HepG2 (cell line): ENCODE measurements at regions of chr4 and their contacts with region 1.

Region 1: GRCh38 chr4:180372691-180373090 is 1870.5 kb upstream of the TENM3 start:
- DNase-seq: no peak
- ATAC-seq: no peak
- H3K4me3 ChIP-seq: no peak overlapping the region
- H3K27ac ChIP-seq: no peak overlapping the region
- H3K4me1 ChIP-seq: no peaks in the 10 kb centered on the region
- H3K27me3 ChIP-seq: no peaks in the 10 kb centered on the region
- CTCF ChIP-seq: no peak
- EP300 ChIP-seq: no peak
- POLR2A ChIP-seq: no peak
- RAD21 ChIP-seq: no peak

Region 2: GRCh38 chr4:180253419-180253818 is 119.3 kb before region 1 on chr4:
- CTCF ChIA-PET with region 1: no interaction called
- POLR2A ChIA-PET with region 1: no interaction called
- in situ Hi-C with region 1: no loop called
- intact Hi-C with region 1: no loop called
- DNase-seq: no peak
- ATAC-seq: no peak
- H3K4me3 ChIP-seq: no peak overlapping the region
- H3K27ac ChIP-seq: no peak overlapping the region
- H3K4me1 ChIP-seq: no peaks in the 10 kb centered on the region
- H3K27me3 ChIP-seq: no peaks in the 10 kb centered on the region
- CTCF ChIP-seq: no peak
- EP300 ChIP-seq: no peak
- POLR2A ChIP-seq: no peak
- RAD21 ChIP-seq: no peak

Region 3: DNA sequence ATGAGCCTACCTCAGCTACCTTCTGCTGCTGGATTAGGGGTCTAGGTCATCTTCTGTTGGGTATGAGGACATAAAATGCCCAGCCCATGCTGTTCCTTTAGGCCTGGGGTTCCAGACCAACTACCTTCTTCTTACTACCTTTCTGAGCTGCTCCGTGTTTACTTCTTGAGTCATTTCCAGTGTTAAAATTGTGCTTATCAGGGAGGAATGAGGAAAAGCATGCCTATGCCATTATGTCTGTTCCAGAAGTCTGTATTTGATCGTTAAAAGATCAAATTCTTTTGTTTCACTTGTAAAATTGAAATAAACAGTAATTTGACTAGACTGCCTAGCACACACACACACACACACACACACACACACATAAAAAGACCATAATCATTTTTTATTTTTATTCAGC is 42.2 kb before region 1 on chr4:
- CTCF ChIA-PET with region 1: no interaction called
- POLR2A ChIA-PET with region 1: no interaction called
- in situ Hi-C with region 1: no loop called
- intact Hi-C with region 1: loop called (anchors 1 kb)
- DNase-seq: no peak
- ATAC-seq: no peak
- H3K4me3 ChIP-seq: no peak overlapping the region
- H3K27ac ChIP-seq: no peak overlapping the region
- H3K4me1 ChIP-seq: no peaks in the 10 kb centered on the region
- H3K27me3 ChIP-seq: no peaks in the 10 kb centered on the region; a peak in 1 of 5 replicates
- CTCF ChIP-seq: no peak
- EP300 ChIP-seq: no peak
- POLR2A ChIP-seq: no peak
- RAD21 ChIP-seq: no peak

Region 4: GRCh38 chr4:180486342-180486741 is 113.7 kb after region 1 on chr4:
- CTCF ChIA-PET with region 1: no interaction called
- POLR2A ChIA-PET with region 1: no interaction called
- in situ Hi-C with region 1: no loop called
- intact Hi-C with region 1: no loop called
- DNase-seq: no peak
- ATAC-seq: no peak
- H3K4me3 ChIP-seq: no peak overlapping the region
- H3K27ac ChIP-seq: no peak overlapping the region
- H3K4me1 ChIP-seq: no peaks in the 10 kb centered on the region
- H3K27me3 ChIP-seq: no peaks in the 10 kb centered on the region
- CTCF ChIP-seq: no peak
- EP300 ChIP-seq: no peak
- POLR2A ChIP-seq: no peak
- RAD21 ChIP-seq: no peak